ENCODE measurements at regions of chr22 and their contacts with region 1.

Region 1: GRCh38 chr22:46681010-46681409 is 57.0 kb downstream of the CERK start:
- DNase-seq: no peak
- H3K4me3 ChIP-seq: no peak overlapping the region
- H3K4me3 Mint-ChIP-seq: no peak overlapping the region
- H3K27ac ChIP-seq: no peak overlapping the region
- H3K27ac Mint-ChIP-seq: no peak overlapping the region
- H3K4me1 ChIP-seq: peaks cover 34 to 35% of the 10 kb centered on the region in 2 donors
- H3K4me1 Mint-ChIP-seq: peaks cover 33% of the 10 kb centered on the region
- H3K27me3 ChIP-seq: no peaks in the 10 kb centered on the region
- H3K27me3 Mint-ChIP-seq: no peaks in the 10 kb centered on the region
- CTCF ChIP-seq: peak; percentile 55

Region 2: DNA sequence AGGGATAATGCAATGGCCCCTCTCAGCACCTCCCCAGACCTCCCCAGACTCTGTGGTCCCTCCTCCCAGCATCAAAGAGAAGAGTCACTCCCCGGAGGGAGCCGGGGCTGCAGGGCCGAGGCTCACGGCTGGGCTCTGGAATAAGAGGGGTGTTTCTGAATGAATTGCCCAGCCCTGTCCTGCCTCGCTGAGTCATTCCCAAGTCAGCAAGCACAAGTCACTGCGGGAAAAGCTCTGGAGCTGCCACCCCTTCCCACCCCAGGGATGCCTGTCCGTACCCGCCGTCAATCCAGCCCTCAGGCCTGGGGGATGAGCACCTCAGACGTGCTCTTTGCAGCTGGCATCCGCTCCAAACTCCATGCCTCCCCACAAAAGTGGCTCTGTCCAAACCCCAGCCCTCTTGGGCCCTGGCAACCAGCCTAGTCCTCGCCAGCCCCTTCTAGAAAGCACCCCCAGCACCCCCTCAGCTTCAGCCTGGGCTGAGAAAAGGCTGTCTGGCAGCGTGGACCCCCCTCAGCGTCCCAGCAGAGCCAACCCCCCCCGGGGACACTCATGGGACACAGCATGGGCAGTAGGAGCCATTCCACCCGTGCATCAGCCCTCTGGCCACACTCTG is 166.3 kb before region 1 on chr22:
- intact Hi-C with region 1: no loop called
- DNase-seq: no peak
- H3K4me3 ChIP-seq: no peak overlapping the region
- H3K4me3 Mint-ChIP-seq: no peak overlapping the region
- H3K27ac ChIP-seq: no peak overlapping the region
- H3K27ac Mint-ChIP-seq: no peak overlapping the region
- H3K4me1 ChIP-seq: peaks cover 0 to 6% of the 10 kb centered on the region in 2 donors
- H3K4me1 Mint-ChIP-seq: no peaks in the 10 kb centered on the region
- H3K27me3 ChIP-seq: peaks cover 0 to 2% of the 10 kb centered on the region in 2 donors
- H3K27me3 Mint-ChIP-seq: peaks cover 6 to 15% (median 8%) of the 10 kb centered on the region in 3 donors
- CTCF ChIP-seq: no peak

Region 3: DNA sequence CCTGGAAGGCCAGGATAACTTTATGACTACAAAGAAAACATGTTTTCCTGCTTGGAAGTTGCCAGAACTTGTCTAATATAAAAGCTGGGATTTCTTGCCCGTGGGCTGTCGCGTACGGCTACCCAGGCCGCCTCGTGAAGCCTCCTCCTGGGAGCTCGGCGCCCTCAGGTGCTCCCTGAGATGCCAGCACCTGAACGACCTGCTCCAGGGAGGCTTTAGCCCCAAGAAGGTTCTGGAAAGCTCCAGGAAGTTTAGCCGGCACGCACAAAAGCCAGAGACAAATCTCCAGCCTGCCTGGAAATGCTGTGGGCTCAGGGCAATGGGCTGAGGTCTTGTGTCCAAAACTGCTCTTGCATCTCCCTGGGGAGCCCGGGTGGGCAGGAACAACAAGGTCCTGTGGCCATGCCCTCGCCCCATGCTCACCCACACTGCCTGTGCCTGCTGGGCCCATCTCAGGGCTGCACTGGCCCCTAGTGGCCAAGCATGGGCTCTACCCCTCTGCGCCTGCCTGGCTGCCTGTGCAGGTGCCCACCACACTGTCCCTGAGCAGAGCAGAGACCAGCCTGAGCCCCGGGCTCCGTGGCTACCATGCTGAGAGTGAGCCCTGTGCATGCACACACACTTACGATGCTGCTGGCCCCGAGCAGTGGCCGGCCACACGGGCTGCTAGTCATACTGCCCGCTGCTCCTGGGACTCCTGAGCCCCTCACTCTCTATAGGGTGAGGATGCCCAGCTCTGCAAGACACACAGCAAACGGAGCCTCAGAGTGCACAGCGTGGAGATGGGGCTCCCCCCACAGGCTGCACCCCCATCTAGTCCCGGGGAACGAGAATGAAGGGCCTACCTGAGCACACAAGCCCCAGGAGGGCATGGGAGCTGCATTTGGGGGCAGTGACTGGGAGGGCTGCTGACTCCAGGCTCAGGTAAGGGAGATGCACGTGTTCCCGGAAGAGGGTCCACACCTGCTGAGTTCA is 138.7 kb before region 1 on chr22:
- intact Hi-C with region 1: no loop called
- DNase-seq: peak; percentile 52 to 70 (median 69)
- H3K4me3 ChIP-seq: no peak overlapping the region
- H3K4me3 Mint-ChIP-seq: no peak overlapping the region
- H3K27ac ChIP-seq: no peak overlapping the region
- H3K27ac Mint-ChIP-seq: no peak overlapping the region
- H3K4me1 ChIP-seq: peaks cover 10 to 16% of the 10 kb centered on the region in 2 donors
- H3K4me1 Mint-ChIP-seq: peaks cover 24% of the 10 kb centered on the region
- H3K27me3 ChIP-seq: peaks cover 19 to 32% of the 10 kb centered on the region in 2 donors
- H3K27me3 Mint-ChIP-seq: peaks cover 33 to 47% (median 42%) of the 10 kb centered on the region in 3 donors
- CTCF ChIP-seq: peak; percentile 99

Region 4: DNA sequence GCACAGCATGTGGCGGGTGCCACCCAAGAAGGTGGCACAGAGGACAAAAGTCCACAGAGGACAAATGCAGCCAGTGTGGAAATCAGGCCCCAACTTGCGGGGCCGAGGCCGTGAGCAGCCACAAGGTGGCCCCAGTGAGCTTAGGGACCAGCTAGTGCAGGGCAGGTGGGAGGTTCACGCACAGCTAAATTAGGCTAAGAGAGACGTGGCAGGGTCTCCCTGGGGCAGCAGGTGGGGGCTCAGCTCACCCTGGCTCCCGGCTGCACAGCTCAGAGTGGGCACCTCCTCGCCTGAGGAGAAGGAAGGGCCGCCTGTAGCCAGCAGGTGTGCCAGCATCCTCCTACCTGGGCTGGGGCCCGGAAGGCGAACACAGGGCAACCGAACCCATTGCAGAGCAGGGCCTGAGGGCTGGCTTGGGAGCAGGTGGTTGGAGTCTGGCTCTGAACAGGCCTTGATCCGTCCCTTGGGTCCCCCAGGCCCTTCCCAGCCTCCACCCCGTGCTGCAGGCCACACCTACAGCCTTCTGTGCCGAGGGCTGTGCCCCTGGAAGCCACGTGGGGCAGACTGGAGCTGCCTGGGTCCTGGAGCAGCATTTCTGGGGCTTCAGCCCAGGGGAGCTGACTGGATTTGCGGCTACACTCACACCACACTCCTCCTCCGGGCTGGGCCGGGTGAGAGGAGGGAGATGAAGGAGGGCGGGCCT is 117.5 kb before region 1 on chr22:
- intact Hi-C with region 1: loop called in 1 of 2 experiments (anchors 10 kb)
- DNase-seq: peak; percentile 75 to 83 (median 77)
- H3K4me3 ChIP-seq: no peak overlapping the region
- H3K4me3 Mint-ChIP-seq: peak overlapping the region in 1 of 2 donors; percentile 21
- H3K27ac ChIP-seq: no peak overlapping the region
- H3K27ac Mint-ChIP-seq: peak overlapping the region in 3 of 7 donors; percentile 1 to 55 (median 21)
- H3K4me1 ChIP-seq: peaks cover 34 to 40% of the 10 kb centered on the region in 2 donors
- H3K4me1 Mint-ChIP-seq: peaks cover 36% of the 10 kb centered on the region
- H3K27me3 ChIP-seq: no peaks in the 10 kb centered on the region
- H3K27me3 Mint-ChIP-seq: peaks cover 0 to 8% (median 0%) of the 10 kb centered on the region in 3 donors
- CTCF ChIP-seq: peak; percentile 77

Region 5: GRCh38 chr22:46576556-46577367 is 104.2 kb before region 1 on chr22:
- intact Hi-C with region 1: loop called in 1 of 2 experiments (anchors 5 kb)
- DNase-seq: peak in 2 of 3 donors; percentile 47 to 48
- H3K4me3 ChIP-seq: peak overlapping the region; percentile 38 to 84 (median 64)
- H3K4me3 Mint-ChIP-seq: peak overlapping the region; percentile 78 to 79
- H3K27ac ChIP-seq: peak overlapping the region in 1 of 2 donors; percentile 26
- H3K27ac Mint-ChIP-seq: peak overlapping the region in 3 of 7 donors; percentile 35 to 77 (median 54)
- H3K4me1 ChIP-seq: peaks cover 64 to 77% of the 10 kb centered on the region in 2 donors
- H3K4me1 Mint-ChIP-seq: peaks cover 73% of the 10 kb centered on the region
- H3K27me3 ChIP-seq: no peaks in the 10 kb centered on the region
- H3K27me3 Mint-ChIP-seq: peaks cover 0 to 10% (median 4%) of the 10 kb centered on the region in 3 donors
- CTCF ChIP-seq: no peak

Region 6: GRCh38 chr22:46714550-46714949 is 33.5 kb after region 1 on chr22:
- intact Hi-C with region 1: no loop called
- DNase-seq: no peak
- H3K4me3 ChIP-seq: no peak overlapping the region
- H3K4me3 Mint-ChIP-seq: no peak overlapping the region
- H3K27ac ChIP-seq: no peak overlapping the region
- H3K27ac Mint-ChIP-seq: peak overlapping the region in 2 of 7 donors; percentile 69 to 78
- H3K4me1 ChIP-seq: no peaks in the 10 kb centered on the region
- H3K4me1 Mint-ChIP-seq: no peaks in the 10 kb centered on the region
- H3K27me3 ChIP-seq: no peaks in the 10 kb centered on the region
- H3K27me3 Mint-ChIP-seq: peaks cover 0 to 2% (median 0%) of the 10 kb centered on the region in 3 donors
- CTCF ChIP-seq: no peak

Region 7: DNA sequence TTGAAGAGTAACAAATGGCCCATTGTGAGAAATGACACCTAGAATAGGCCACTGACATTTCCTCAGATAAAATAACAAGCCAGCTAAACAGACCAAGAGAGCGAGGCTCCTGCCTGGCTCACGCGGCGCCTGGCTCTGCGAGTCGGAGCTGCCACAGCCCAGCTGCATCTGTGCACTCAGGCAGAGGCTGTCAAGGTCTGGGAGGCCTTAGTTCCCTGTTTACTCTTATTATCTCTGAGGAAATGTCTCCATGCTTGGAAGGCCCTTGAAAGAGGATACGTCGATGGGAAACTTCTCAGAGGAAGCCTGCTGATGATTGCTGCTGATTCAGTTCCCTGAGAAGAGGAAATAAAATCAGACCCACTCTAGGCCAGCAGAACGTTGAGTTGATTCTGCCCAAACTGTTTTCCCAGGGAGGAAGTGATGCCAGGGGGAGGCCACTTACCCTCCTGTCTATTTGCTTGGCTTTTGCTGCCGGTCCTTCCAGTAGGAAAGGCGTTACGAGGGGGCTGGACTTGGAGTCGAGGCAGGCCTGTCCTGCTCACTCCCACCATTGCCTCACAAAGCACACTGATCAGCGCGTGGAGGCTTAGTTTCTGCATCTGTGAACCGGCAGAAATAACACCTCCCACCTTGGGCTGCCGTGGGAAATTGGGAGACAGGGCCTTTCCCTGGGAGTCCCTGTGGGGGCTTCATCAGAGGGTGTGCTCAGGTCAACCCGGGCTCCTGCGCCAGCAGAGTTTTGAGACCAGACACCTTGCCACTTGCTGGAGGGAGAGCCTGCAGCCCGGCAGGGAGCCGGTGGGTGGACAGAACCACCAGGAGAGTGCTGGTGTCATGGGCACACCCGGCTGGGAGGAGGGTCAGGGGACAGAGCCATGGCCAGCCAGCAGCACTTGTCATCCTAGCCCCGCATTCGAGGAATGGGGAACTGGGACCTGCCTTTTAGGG is 290.4 kb after region 1 on chr22:
- intact Hi-C with region 1: no loop called
- DNase-seq: peak; percentile 4 to 56 (median 6)
- H3K4me3 ChIP-seq: no peak overlapping the region
- H3K4me3 Mint-ChIP-seq: no peak overlapping the region
- H3K27ac ChIP-seq: peak overlapping the region; percentile 7 to 48
- H3K27ac Mint-ChIP-seq: peak overlapping the region in 5 of 7 donors; percentile 54 to 75 (median 61)
- H3K4me1 ChIP-seq: peaks cover 0 to 4% of the 10 kb centered on the region in 2 donors
- H3K4me1 Mint-ChIP-seq: peaks cover 13% of the 10 kb centered on the region
- H3K27me3 ChIP-seq: no peaks in the 10 kb centered on the region
- H3K27me3 Mint-ChIP-seq: peaks cover 0 to 2% (median 0%) of the 10 kb centered on the region in 3 donors
- CTCF ChIP-seq: no peak